Activated naive CD4-positive, alpha-beta T cell treated with anti-CD3 and anti-CD28 coated beads for 36 hours (primary cell): ENCODE measurements at regions of chr11 and their contacts with region 1.

Region 1: GRCh38 chr11:35165423-35166368 is 26.7 kb downstream of the CD44 start:
- DNase-seq: peak; percentile 95
- H3K4me3 Mint-ChIP-seq: peak overlapping the region; percentile 65
- H3K27ac Mint-ChIP-seq: peak overlapping the region; percentile 98
- H3K4me1 Mint-ChIP-seq: peaks cover 99% of the 10 kb centered on the region
- H3K27me3 Mint-ChIP-seq: no peaks in the 10 kb centered on the region

Region 2: DNA sequence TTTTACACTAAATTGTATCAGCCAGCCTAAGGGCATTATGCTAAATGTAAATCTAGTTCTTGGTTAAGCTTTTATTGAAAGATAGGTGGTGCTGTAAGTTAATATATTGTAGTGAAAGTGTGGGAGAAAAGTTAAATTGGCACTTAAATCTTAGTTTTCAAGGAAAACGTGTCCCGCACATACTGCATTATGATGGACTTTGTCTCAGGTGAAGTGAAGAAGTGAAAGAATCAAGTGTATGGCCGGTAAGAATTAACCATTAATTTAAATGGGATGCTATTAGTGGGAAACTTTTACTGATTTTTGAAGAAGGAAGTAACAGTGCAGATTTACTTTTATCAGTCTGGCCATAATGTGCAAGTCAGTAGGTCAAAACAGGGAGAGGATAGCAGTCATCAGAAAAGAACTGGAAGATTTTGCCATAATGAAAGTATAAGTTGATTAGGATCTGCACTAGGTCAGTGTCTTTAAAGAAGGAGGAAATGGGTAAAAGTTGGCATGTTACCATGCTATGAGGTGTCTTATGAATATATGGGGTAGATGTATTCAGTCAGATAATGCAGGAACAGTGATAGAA is 167.7 kb before region 1 on chr11:
- CTCF ChIA-PET with region 1: interaction called, 6 read pairs
- intact Hi-C with region 1: loop called (anchors 1 kb)
- DNase-seq: no peak
- H3K4me3 Mint-ChIP-seq: no peak overlapping the region
- H3K27ac Mint-ChIP-seq: peak overlapping the region; percentile 9
- H3K4me1 Mint-ChIP-seq: peaks cover 30% of the 10 kb centered on the region
- H3K27me3 Mint-ChIP-seq: no peaks in the 10 kb centered on the region

Region 3: DNA sequence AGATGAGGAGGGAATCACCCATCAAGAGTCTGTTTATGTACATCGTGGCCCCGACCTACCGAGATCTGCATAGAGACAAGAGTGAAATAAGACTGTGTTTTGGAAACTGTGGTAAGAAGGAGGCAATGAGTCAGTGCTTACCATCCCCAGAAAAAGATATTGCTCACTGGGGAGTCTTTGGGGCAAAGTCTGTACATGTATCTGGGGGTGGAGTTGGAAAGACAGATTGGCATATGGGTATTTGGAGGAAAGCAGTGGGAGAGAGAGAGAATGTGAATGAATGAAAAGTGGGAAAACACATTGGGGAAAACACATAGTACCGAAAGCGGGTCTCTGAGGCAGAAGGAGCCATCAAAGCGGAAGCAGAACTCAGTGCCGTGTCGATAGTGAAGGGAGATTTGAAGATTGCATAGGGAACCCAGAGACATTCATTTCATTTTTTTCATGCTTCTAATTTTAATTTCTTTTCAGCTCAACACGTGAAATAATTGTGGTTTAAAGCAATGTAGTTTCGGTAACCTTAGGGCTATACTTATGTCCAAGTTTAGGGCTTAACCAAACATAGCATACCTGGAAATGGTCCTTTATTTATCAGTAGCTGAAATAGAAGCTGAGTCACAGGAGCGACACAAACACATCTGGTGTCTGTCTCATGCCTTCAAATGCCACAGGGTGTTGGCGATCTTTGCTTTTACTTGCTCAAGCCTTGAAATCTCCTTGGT is 125.3 kb before region 1 on chr11:
- CTCF ChIA-PET with region 1: interaction called, 5 read pairs
- intact Hi-C with region 1: loop called (anchors 1 kb)
- DNase-seq: peak; percentile 83
- H3K4me3 Mint-ChIP-seq: peak overlapping the region; percentile 76
- H3K27ac Mint-ChIP-seq: peak overlapping the region; percentile 94
- H3K4me1 Mint-ChIP-seq: peaks cover 60% of the 10 kb centered on the region
- H3K27me3 Mint-ChIP-seq: peaks cover 5% of the 10 kb centered on the region

Region 4: DNA sequence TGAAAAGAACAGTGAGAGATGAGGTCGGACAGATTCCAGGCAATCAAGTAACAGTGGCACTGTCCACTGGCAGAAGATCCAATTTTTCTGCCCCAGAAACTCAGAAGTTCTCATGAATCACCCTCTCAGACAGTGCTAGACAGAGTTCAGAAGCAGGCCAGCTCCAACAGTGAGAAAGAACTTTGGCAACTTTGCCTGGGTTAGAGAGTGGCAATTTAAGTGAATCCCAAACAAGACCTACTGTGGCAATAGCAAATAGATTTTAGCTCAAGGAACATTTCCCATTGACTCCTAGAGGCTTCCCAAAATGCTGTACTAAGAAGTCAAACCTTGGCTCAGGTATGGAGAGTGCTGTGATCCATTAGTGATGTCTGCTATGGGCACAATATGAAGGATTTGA is 14.5 kb before region 1 on chr11:
- CTCF ChIA-PET with region 1: interaction called, 26 read pairs
- intact Hi-C with region 1: loop called (anchors 1 kb)
- DNase-seq: no peak
- H3K4me3 Mint-ChIP-seq: no peak overlapping the region
- H3K27ac Mint-ChIP-seq: peak overlapping the region; percentile 82
- H3K4me1 Mint-ChIP-seq: peaks cover 96% of the 10 kb centered on the region
- H3K27me3 Mint-ChIP-seq: no peaks in the 10 kb centered on the region

Region 5: DNA sequence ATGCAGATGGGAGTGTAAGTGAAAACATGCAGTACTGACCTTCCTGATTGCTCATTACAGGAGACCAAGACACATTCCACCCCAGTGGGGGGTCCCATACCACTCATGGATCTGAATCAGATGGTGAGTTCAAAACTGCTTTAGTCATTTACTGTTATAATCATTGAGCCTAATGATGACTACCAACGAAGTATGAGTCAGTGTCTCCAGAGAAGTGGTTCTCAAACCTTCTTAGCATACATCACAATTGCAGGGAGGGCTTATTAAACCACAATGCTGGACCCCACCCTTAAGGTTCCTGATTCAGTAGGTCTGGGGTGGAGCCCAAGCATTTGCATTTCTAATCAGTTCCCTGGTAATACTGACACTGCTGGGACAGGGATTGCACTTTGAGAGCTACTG is 49.1 kb after region 1 on chr11:
- CTCF ChIA-PET with region 1: no interaction called
- intact Hi-C with region 1: loop called (anchors 1 kb)
- DNase-seq: peak; percentile 77
- H3K4me3 Mint-ChIP-seq: no peak overlapping the region
- H3K27ac Mint-ChIP-seq: peak overlapping the region; percentile 78
- H3K4me1 Mint-ChIP-seq: peaks cover 62% of the 10 kb centered on the region
- H3K27me3 Mint-ChIP-seq: no peaks in the 10 kb centered on the region

Region 6: DNA sequence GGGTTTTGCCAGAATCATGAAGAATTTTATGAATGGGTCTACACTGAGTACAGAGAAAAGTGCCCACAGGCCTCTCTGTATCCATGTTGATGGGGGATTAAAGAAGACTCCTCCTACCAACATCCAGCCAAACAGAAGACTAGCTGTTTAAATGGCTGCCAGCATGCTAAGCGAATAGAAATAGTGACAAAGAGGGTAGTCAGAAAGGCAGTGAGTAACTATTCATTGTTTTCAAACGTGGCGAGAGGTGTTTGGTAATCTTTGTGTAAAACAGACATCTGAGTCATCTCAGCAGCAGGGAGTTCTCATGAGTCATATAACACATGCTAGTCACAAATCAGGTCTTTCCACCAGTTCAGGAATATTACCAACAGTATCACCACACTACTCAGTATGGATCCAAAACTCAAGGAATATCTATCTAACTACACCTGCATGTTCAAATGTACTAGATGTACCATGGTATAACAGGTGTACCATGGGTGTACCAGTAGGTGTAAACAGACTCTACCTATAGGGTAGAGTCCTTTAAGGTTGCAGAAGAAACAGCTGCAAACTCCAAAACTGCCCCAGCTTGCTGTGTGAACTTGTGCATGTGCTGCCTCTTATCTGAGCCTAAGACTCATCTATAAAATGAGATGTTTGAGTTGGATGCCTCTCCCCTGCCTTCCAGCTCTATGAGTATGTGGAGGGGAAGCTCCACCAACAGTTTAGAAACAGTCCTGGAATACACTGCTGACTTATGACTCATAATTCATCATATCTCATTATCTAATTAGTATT is 171.6 kb after region 1 on chr11:
- CTCF ChIA-PET with region 1: interaction called, 3 read pairs
- intact Hi-C with region 1: loop called (anchors 1 kb)
- DNase-seq: peak; percentile 65
- H3K4me3 Mint-ChIP-seq: no peak overlapping the region
- H3K27ac Mint-ChIP-seq: peak overlapping the region; percentile 82
- H3K4me1 Mint-ChIP-seq: peaks cover 41% of the 10 kb centered on the region
- H3K27me3 Mint-ChIP-seq: no peaks in the 10 kb centered on the region